Activated T-helper 1 cell treated with anti-CD3 and anti-CD28 coated beads, Interleukin-12 subunit alpha, Interleukin-12 subunit beta, Interleukin-2, Interleukin-4 antibody, amounts not matched to agents 30 ng/mL and 10 ng/mL and 1 ng/mL, durations not matched to agents 14 hours and 24 hours and 36 hours (primary cell): ENCODE measurements at regions of chr2 and their contacts with region 1.

Region 1: DNA sequence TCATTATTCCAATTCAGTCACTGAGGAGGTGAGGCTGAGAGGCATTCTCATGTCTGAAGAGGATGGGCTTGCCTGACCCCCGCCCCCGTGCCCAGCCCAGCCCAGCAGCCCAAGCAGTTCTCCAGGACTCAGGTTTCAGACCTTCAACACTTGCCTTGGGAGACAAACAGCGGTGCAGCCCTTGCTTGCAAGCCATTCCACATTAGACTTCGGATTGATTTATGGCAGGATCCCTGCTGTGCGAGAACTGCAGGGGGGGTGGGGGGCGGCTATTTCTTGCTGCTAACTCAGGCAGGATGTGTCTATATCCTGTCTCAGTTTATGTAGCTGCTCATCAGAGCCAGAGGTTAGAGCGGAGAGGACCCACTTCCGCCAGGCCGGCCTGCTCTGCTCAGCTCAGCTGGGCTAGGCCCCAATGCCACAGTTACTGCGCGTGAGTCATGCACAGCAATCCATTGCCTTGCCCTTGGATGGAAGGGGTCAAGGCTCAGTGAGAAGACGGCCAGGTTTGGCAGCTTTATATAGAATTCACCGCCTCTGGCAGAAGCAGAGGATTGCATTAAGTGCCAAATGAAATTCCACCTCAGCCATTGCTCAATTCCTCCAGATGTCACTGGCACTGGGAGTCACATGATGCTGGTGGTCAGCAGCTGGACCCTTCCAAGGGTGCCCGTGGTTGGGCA is 1.8 kb downstream of the GYPC start:
- DNase-seq: peak; percentile 70
- H3K4me3 Mint-ChIP-seq: peak overlapping the region; percentile 99
- H3K27ac Mint-ChIP-seq: peak overlapping the region; percentile 98
- H3K4me1 Mint-ChIP-seq: peaks cover 67% of the 10 kb centered on the region
- H3K27me3 Mint-ChIP-seq: no peaks in the 10 kb centered on the region

Region 2: GRCh38 chr2:126175222-126175621 is 482.6 kb before region 1 on chr2:
- intact Hi-C with region 1: no loop called
- DNase-seq: no peak
- H3K4me3 Mint-ChIP-seq: no peak overlapping the region
- H3K27ac Mint-ChIP-seq: no peak overlapping the region
- H3K4me1 Mint-ChIP-seq: no peaks in the 10 kb centered on the region
- H3K27me3 Mint-ChIP-seq: no peaks in the 10 kb centered on the region

Region 3: GRCh38 chr2:126527836-126528507 is 129.8 kb before region 1 on chr2:
- intact Hi-C with region 1: loop called (anchors 10 kb)
- DNase-seq: peak; percentile 38
- H3K4me3 Mint-ChIP-seq: no peak overlapping the region
- H3K27ac Mint-ChIP-seq: no peak overlapping the region
- H3K4me1 Mint-ChIP-seq: no peaks in the 10 kb centered on the region
- H3K27me3 Mint-ChIP-seq: peaks cover 6% of the 10 kb centered on the region

Region 4: GRCh38 chr2:126600742-126601141 is 57.0 kb before region 1 on chr2:
- intact Hi-C with region 1: no loop called
- DNase-seq: no peak
- H3K4me3 Mint-ChIP-seq: no peak overlapping the region
- H3K27ac Mint-ChIP-seq: no peak overlapping the region
- H3K4me1 Mint-ChIP-seq: no peaks in the 10 kb centered on the region
- H3K27me3 Mint-ChIP-seq: no peaks in the 10 kb centered on the region

Region 5: GRCh38 chr2:126719833-126720351 is 62.1 kb after region 1 on chr2:
- intact Hi-C with region 1: no loop called
- DNase-seq: no peak
- H3K4me3 Mint-ChIP-seq: no peak overlapping the region
- H3K27ac Mint-ChIP-seq: no peak overlapping the region
- H3K4me1 Mint-ChIP-seq: no peaks in the 10 kb centered on the region
- H3K27me3 Mint-ChIP-seq: peaks cover 5% of the 10 kb centered on the region

Region 6: DNA sequence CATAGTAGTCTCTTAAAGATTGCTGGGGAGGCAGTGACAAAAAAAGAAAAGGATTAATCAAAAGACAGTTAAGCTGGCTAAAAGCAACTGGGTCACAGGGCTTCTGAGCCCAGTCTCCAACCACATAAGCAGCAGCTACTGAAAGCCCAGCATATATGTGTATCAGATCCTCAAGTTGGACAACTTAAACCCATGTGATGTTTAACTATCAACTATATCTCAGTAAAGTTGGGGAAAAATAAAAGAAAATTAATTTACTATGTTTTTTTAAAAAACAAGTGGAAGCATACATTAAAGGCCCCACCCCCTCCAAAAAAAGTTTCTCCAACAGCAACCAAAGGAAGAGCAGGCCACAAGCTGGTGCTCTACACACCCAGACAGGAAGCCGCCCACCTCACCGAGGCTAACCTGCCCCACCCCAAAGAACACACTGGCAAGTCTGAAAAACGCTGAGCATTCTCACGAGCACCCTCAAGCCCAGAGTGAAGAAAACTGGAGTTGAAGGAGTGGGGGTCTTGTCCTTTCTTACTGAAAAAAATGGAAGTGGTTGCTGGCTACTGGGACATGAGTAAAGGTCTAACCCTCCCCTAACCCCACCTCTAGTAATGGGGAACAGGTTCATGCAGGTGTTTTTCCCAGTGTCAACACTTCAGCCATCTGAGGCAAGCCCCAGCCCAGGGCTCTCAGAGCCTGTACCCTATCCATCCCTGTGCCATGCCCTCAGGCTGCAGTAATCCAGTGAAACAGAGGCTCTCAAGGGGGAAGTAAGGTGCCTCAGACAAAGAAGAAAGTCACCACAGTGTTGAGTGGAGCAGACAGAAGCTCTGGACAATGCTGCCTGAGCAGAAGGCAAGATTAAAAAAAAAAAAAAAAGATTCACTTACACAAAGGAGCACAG is 104.5 kb after region 1 on chr2:
- intact Hi-C with region 1: loop called (anchors 5 kb)
- DNase-seq: peak; percentile 42
- H3K4me3 Mint-ChIP-seq: peak overlapping the region; percentile 3
- H3K27ac Mint-ChIP-seq: peak overlapping the region; percentile 45
- H3K4me1 Mint-ChIP-seq: peaks cover 45% of the 10 kb centered on the region
- H3K27me3 Mint-ChIP-seq: peaks cover 17% of the 10 kb centered on the region

Region 7: DNA sequence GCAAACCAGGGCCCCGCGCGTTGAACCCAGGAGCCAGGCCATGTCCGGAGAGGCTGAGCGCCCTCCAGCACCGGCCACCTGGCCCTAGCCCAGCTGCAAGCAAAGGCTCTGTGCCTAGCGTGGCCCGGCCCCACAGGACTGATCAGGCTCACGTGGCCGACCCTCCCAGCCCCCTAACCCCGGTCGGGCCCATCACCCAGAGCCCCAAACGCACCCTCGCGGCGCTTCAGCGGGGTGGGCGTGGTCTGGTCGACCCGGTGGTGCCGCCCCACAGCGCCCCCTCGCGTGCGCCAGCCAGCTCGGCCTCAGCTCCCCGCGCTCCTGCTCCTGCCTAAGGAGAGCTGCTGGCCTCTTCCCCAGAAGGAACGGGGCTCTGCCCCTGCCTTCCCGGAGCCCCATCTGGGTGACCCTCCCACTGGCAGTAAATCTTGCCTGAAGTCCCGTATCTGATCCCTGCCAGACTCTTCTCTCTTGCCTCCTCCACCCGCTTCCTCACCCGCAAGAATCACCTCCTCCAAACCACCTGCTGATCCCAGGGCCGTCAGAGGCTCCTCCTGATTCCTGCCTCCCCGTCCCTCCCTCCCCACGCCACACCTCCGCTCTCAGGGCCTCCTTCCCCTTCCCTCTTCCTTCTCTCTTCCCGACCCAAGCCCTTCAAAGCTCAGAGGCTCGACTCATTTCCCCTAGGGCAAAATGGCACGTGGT is 228.6 kb after region 1 on chr2:
- intact Hi-C with region 1: no loop called
- DNase-seq: peak; percentile 33
- H3K4me3 Mint-ChIP-seq: peak overlapping the region; percentile 22
- H3K27ac Mint-ChIP-seq: no peak overlapping the region
- H3K4me1 Mint-ChIP-seq: peaks cover 7% of the 10 kb centered on the region
- H3K27me3 Mint-ChIP-seq: peaks cover 6% of the 10 kb centered on the region

Region 8: GRCh38 chr2:127025359-127026166 is 367.8 kb after region 1 on chr2:
- intact Hi-C with region 1: loop called (anchors 5 kb)
- DNase-seq: peak; percentile 76
- H3K4me3 Mint-ChIP-seq: peak overlapping the region; percentile 73
- H3K27ac Mint-ChIP-seq: no peak overlapping the region
- H3K4me1 Mint-ChIP-seq: peaks cover 15% of the 10 kb centered on the region
- H3K27me3 Mint-ChIP-seq: peaks cover 36% of the 10 kb centered on the region

Region 9: DNA sequence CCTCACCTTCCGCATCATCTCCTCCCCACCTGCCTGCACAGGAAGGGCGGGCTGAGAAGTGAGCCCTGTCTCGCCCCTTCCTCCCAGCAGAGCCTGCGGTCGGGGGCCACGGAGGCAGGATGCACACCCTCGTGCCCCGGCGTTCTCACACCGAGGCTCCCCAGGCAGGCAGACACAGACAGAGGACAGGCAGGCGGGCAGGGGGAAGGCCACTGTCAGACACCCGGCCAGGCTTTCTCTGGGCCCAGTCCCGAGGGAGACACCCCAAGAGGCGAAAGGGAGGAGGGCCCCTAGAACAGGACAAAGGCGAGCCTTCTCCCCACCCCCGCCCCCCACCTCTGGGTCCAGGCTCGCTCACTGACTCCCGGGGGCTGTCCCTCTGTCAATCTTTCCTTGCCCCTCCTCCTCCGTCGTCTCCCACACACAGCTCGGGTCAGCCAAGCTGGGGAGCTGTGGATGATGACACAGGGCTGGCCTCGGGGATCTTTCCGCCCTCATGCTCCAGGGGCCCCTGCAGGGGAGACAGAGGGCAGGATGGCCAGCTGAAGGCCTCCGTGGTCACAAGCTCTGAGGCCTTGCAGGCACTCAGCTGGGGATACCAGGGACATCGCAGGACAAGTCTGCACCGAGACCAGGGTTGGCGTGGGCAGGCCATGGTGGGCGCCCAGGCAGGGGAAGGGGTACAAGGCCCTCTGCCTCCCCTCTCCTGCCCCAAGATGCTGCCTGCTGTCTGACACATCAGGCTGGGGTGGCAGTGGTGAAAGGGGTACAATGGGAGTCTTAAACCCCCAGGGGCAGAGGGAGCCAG is 424.3 kb after region 1 on chr2:
- intact Hi-C with region 1: loop called (anchors 5 kb)
- DNase-seq: peak; percentile 72
- H3K4me3 Mint-ChIP-seq: peak overlapping the region; percentile 86
- H3K27ac Mint-ChIP-seq: peak overlapping the region; percentile 89
- H3K4me1 Mint-ChIP-seq: peaks cover 84% of the 10 kb centered on the region
- H3K27me3 Mint-ChIP-seq: peaks cover 2% of the 10 kb centered on the region

Region 10: GRCh38 chr2:128090945-128091725 is 1433.4 kb after region 1 on chr2 and contains the start of gene UGGT1:
- intact Hi-C with region 1: loop called (anchors 5 kb)
- DNase-seq: peak; percentile 93
- H3K4me3 Mint-ChIP-seq: peak within 1 kb of the TSS; percentile 87
- H3K27ac Mint-ChIP-seq: peak within 1 kb of the TSS; percentile 85
- H3K4me1 Mint-ChIP-seq: peaks cover 38% of the 10 kb centered on the region
- H3K27me3 Mint-ChIP-seq: peaks cover 7% of the 10 kb centered on the region
- total RNA-seq, gene UGGT1: 65.2 and 70.7 TPM in 2 replicates